Activated CD4-positive, alpha-beta memory T cell treated with anti-CD3 and anti-CD28 coated beads, Interleukin-2, amount 10 ng/mL, durations not matched to agents 7 days and 5 days (primary cell): ENCODE measurements at regions of chr20 and their contacts with region 1.

Region 1: GRCh38 chr20:35490736-35491181 is 35.4 kb downstream of the CEP250 start:
- DNase-seq: peak; percentile 80
- H3K4me3 Mint-ChIP-seq: peak overlapping the region; percentile 97
- H3K27ac Mint-ChIP-seq: peak overlapping the region; percentile 99
- H3K4me1 Mint-ChIP-seq: peaks cover 53% of the 10 kb centered on the region
- H3K27me3 Mint-ChIP-seq: no peaks in the 10 kb centered on the region

Region 2: DNA sequence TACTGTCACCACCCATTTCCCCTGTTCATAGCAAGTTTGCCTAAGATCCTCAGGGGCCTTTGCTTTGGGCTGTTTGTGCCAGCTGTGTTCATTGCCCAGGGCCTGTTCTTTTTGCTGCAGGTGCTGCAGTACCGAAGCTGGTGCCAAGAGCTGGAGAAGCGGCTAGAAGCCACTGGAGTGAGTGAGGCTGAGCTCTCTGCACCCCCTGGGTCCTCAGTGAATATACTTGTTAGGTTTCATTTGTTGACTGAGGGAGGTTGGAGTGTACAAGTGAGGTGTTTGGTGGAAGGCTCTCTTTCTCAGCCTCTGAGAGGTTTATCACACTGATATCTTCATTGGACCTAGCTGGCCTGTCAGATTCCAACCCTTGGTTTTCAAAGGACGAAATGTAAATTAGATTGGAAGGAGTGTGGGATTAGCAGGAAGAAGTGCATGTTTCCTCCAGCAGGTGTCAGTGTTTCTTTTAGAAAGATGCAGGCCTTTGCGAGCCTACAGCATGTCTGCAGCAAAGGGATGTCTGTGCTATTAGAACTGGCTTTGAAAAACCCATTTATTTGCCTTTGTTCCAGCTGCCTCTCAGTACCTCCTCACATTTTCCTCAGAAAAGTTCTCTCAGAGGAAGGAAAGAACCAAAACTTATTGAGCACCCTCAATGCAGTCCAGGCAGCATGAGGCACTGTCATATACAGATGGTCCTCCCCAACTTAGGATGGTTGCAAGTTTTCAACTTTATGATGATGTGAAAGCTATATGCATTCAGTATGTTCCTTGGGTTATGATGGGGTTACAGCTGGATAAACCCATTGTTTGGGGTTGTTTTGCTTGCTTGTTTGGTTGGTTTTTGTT is 27.1 kb before region 1 on chr20:
- CTCF ChIA-PET with region 1: interaction called, 4 read pairs
- POLR2A ChIA-PET with region 1: interaction called, 58 read pairs
- DNase-seq: peak; percentile 63
- H3K4me3 Mint-ChIP-seq: no peak overlapping the region
- H3K27ac Mint-ChIP-seq: no peak overlapping the region
- H3K4me1 Mint-ChIP-seq: peaks cover 2% of the 10 kb centered on the region
- H3K27me3 Mint-ChIP-seq: no peaks in the 10 kb centered on the region

Region 3: DNA sequence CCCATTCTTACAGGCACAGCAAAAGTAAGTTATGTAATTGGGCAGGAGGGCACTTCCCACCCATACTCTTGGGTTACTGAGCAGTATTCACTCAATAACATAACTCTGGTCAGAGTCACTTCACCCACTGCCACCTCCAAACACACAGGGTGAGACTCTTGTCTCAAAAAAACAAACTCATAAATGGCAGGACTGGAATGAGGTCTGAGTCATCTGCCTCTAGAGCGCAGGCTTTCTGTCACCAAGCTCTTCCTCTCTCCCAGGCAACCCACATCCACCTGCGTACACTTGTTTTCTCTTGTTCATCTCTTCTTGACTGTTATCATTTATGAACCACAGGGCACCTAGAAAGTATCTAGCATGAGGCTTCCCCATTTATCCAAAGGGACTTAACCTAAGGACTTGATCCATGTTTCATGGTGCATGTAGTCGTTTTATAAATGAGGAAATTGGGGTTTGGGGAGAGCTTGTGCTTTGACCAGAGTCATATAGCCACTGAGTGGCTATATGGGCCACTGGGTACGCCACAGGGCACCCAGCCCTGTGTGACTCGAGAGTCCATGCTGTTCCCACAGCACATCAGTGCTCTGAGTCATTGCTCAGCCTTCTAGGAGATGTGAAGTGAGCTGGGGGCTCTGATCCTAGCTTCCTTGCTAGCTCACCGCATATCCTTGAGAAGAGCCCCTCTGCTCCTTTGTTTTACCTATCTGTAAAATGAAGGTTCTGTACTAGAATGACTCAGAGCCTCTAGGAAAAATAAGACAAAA is 16.3 kb after region 1 on chr20:
- CTCF ChIA-PET with region 1: interaction called, 3 read pairs
- POLR2A ChIA-PET with region 1: interaction called, 17 read pairs
- DNase-seq: peak; percentile 27
- H3K4me3 Mint-ChIP-seq: no peak overlapping the region
- H3K27ac Mint-ChIP-seq: peak overlapping the region; percentile 11
- H3K4me1 Mint-ChIP-seq: peaks cover 36% of the 10 kb centered on the region
- H3K27me3 Mint-ChIP-seq: no peaks in the 10 kb centered on the region

Region 4: DNA sequence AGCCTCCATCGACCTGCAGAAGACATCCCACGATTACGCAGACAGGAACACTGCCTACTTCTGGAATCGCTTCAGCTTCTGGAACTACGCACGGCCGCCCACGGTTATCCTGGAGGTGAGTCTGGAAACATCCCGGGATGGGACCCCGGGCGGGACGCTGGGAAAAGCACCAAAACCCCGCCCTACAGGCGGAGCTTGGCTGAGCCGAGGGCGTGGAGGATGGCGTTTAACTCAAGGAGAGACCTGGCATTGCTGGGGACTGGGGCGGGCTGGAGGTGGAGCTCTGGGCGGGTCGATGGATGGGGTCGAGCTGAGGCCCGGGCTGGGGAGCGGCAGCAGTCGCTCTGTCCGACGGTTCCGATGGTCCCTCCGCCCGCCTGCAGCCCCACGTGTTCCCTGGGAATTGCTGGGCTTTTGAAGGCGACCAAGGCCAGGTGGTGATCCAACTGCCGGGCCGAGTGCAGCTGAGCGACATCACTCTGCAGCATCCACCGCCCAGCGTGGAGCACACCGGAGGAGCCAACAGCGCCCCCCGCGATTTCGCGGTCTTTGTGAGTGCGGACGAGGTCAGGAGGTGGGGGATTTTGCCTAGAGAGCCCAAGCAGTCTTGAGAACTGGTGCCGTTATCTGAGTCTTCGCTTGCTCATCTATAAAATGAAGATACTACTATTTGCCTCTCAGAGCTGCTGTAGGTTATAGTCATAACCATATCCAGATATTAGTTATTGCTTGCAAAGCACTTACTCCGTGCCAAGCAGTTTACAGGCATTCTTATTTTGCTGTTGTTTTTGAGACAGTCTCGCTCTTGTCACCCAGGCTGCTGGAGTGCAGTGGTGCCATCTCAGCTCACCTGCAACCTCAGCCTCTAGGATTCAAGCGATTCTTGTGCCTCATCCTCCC is 128.7 kb after region 1 on chr20:
- CTCF ChIA-PET with region 1: interaction called, 8 read pairs
- POLR2A ChIA-PET with region 1: interaction called, 33 read pairs
- DNase-seq: peak; percentile 78
- H3K4me3 Mint-ChIP-seq: peak overlapping the region; percentile 83
- H3K27ac Mint-ChIP-seq: peak overlapping the region; percentile 70
- H3K4me1 Mint-ChIP-seq: peaks cover 45% of the 10 kb centered on the region
- H3K27me3 Mint-ChIP-seq: peaks cover 1% of the 10 kb centered on the region

Region 5: GRCh38 chr20:35954200-35954906 is 463.6 kb after region 1 on chr20 and contains the start of gene SCAND1:
- CTCF ChIA-PET with region 1: interaction called, 13 read pairs
- POLR2A ChIA-PET with region 1: interaction called, 22 read pairs
- DNase-seq: peak; percentile 97
- H3K4me3 Mint-ChIP-seq: peak within 1 kb of the TSS; percentile 99
- H3K27ac Mint-ChIP-seq: peak within 1 kb of the TSS; percentile 100
- H3K4me1 Mint-ChIP-seq: peaks cover 25% of the 10 kb centered on the region
- H3K27me3 Mint-ChIP-seq: no peaks in the 10 kb centered on the region
- total RNA-seq, gene SCAND1: 65.5 to 70.0 TPM